Activated CD4-positive, alpha-beta memory T cell treated with anti-CD3 and anti-CD28 coated beads, Interleukin-2, amount 10 ng/mL, durations not matched to agents 7 days and 5 days (primary cell): ENCODE measurements at regions of chr5 and their contacts with region 1.

Region 1: GRCh38 chr5:68215208-68215897 is at the start of gene PIK3R1:
- DNase-seq: peak; percentile 93
- H3K4me3 Mint-ChIP-seq: peak within 1 kb of the TSS; percentile 85
- H3K27ac Mint-ChIP-seq: peak within 1 kb of the TSS; percentile 88
- H3K4me1 Mint-ChIP-seq: peaks cover 33% of the 10 kb centered on the region
- H3K27me3 Mint-ChIP-seq: no peaks in the 10 kb centered on the region
- total RNA-seq, gene PIK3R1: 83.1 to 86.4 TPM

Region 2: GRCh38 chr5:67209142-67209771 is 1006.1 kb before region 1 on chr5:
- CTCF ChIA-PET with region 1: interaction called, 4 read pairs
- POLR2A ChIA-PET with region 1: interaction called, 21 read pairs
- DNase-seq: peak; percentile 68
- H3K4me3 Mint-ChIP-seq: no peak overlapping the region
- H3K27ac Mint-ChIP-seq: peak overlapping the region; percentile 66
- H3K4me1 Mint-ChIP-seq: peaks cover 70% of the 10 kb centered on the region
- H3K27me3 Mint-ChIP-seq: no peaks in the 10 kb centered on the region

Region 3: GRCh38 chr5:68239487-68239886 is 24.1 kb after region 1 on chr5:
- CTCF ChIA-PET with region 1: interaction called, 5 read pairs
- POLR2A ChIA-PET with region 1: interaction called, 27 read pairs
- DNase-seq: peak; percentile 82
- H3K4me3 Mint-ChIP-seq: no peak overlapping the region
- H3K27ac Mint-ChIP-seq: peak overlapping the region; percentile 8
- H3K4me1 Mint-ChIP-seq: peaks cover 61% of the 10 kb centered on the region
- H3K27me3 Mint-ChIP-seq: no peaks in the 10 kb centered on the region

Region 4: DNA sequence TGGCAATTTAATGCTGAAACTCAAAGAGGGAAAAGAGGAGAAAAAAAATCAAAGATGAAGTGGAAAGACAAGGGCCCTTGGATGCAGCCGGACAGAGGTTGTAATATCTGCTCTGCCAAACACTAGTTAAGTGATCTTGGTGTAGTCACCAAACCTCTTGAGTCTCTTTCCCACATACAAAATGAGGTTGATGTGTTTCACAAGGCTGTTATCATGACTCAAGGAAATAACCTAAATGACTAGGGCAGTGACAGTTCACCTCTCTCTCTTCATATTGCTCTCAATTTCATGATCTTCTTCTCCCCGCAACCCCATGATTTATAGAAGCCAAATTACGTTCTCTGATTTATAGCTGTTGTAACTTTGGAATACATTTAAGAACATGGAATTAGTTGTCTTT is 45.1 kb after region 1 on chr5:
- CTCF ChIA-PET with region 1: interaction called, 10 read pairs
- POLR2A ChIA-PET with region 1: interaction called, 50 read pairs
- DNase-seq: no peak
- H3K4me3 Mint-ChIP-seq: no peak overlapping the region
- H3K27ac Mint-ChIP-seq: no peak overlapping the region
- H3K4me1 Mint-ChIP-seq: peaks cover 59% of the 10 kb centered on the region
- H3K27me3 Mint-ChIP-seq: no peaks in the 10 kb centered on the region

Region 5: DNA sequence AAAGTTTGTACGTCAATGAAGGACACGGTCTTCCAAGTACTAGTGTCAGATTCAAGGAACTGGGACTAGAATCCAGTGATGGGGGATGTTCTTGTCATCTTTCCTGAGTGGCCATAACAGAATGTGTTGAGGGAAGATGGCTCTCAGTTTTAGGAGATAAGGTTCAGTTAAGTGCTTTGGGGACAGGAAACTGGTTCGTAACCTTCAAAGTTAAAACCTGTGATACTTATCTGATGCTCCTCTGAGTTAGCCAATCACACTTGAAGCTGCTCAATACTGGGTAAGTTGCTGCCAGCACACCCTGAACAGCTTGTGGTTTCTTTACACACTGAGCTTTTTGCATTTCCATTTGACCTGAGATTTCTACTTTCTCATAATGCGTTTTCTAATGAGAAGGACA is 64.6 kb after region 1 on chr5:
- CTCF ChIA-PET with region 1: interaction called, 16 read pairs
- POLR2A ChIA-PET with region 1: interaction called, 51 read pairs
- DNase-seq: peak; percentile 62
- H3K4me3 Mint-ChIP-seq: peak overlapping the region; percentile 84
- H3K27ac Mint-ChIP-seq: peak overlapping the region; percentile 94
- H3K4me1 Mint-ChIP-seq: peaks cover 89% of the 10 kb centered on the region
- H3K27me3 Mint-ChIP-seq: no peaks in the 10 kb centered on the region